ENCODE measurements at regions of chr17 and their contacts with region 1.

Region 1: GRCh38 chr17:81238817-81239600 is at the starts of genes NDUFAF8 and TEPSIN:
- DNase-seq: peak; percentile 89 to 99 (median 93)
- ATAC-seq: peak; percentile 95
- H3K4me3 ChIP-seq: peak within 1 kb of the TSS; percentile 90
- H3K4me3 Mint-ChIP-seq: peak within 1 kb of the TSS; percentile 98
- H3K27ac ChIP-seq: peak within 1 kb of the TSS in 1 of 2 donors; percentile 47
- H3K27ac Mint-ChIP-seq: peak within 1 kb of the TSS; percentile 92
- H3K4me1 ChIP-seq: peaks cover 58% of the 10 kb centered on the region
- H3K4me1 Mint-ChIP-seq: peaks cover 43% of the 10 kb centered on the region
- H3K27me3 ChIP-seq: no peaks in the 10 kb centered on the region
- H3K27me3 Mint-ChIP-seq: no peaks in the 10 kb centered on the region
- CTCF ChIP-seq: no peak
- total RNA-seq, gene NDUFAF8: 34.6 to 38.6 TPM
- total RNA-seq, gene TEPSIN: 68.2 to 74.4 TPM

Region 2: DNA sequence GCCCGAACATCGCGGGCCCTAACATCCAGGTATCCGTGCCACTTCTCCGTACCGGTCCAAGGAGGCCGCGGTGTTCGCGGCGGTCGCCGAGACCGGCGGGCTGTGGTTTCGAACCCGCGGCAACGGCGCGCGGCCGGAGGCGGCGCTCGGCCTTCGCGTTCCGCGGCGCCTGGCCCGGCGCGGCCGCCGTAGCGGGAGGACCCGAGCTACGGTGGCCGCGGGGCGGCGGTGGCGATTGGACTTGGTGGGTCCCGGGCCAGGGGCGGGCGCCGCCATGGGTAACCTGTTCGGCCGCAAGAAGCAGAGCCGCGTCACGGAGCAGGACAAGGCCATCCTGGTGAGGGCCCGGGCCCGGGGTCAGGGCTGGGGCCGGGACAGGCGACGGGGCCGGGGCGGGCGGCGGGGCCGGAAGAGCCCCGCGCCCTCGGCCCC is 247.3 kb before region 1 on chr17 and contains the start of gene CHMP6:
- CTCF ChIA-PET with region 1: no interaction called
- POLR2A ChIA-PET with region 1: interaction called, 3 read pairs
- intact Hi-C with region 1: loop called in 1 of 2 experiments (anchors 5 kb)
- DNase-seq: peak; percentile 45 to 87 (median 66)
- ATAC-seq: peak; percentile 70
- H3K4me3 ChIP-seq: peak within 1 kb of the TSS; percentile 77
- H3K4me3 Mint-ChIP-seq: peak within 1 kb of the TSS; percentile 87
- H3K27ac ChIP-seq: peak within 1 kb of the TSS in 1 of 2 donors; percentile 41
- H3K27ac Mint-ChIP-seq: peak within 1 kb of the TSS; percentile 84
- H3K4me1 ChIP-seq: peaks cover 43% of the 10 kb centered on the region
- H3K4me1 Mint-ChIP-seq: peaks cover 21% of the 10 kb centered on the region
- H3K27me3 ChIP-seq: no peaks in the 10 kb centered on the region
- H3K27me3 Mint-ChIP-seq: peaks cover 4% of the 10 kb centered on the region
- CTCF ChIP-seq: no peak
- total RNA-seq, gene CHMP6: 11.5 to 13.3 TPM

Region 3: DNA sequence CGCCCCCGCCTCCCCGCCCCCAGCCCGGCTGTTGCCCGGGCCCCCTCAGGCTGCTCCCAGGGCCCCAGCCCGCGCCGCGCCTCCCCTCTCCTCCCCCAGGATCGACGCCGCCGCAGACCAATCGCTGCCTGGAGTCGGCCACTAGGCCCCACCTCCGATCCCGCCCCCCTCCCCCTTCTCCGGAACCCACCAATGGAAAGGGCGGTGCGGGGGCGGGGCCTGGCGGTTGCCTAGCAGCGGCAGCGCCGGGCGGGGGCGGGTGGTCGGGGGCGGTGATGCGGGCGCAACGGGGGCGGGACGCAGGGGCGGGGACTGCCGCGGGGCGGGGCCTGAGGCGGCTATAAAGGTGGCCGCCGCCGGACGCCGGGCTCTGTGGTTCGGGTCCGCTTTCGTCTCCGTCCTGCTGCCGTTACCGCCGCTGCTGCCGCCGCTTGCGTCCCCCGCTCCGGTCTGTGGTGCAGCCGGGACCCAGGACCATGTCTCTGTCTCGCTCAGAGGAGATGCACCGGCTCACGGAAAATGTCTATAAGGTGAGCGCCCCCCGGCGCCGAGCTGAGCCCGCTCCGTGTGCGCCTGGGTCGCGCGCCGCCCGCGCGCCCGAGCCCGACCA is 204.1 kb before region 1 on chr17 and contains the start of gene BAIAP2:
- CTCF ChIA-PET with region 1: no interaction called
- POLR2A ChIA-PET with region 1: interaction called, 4 read pairs
- intact Hi-C with region 1: loop called in 1 of 2 experiments (anchors 5 kb)
- DNase-seq: peak; percentile 96 to 100 (median 98)
- ATAC-seq: peak; percentile 86
- H3K4me3 ChIP-seq: peak within 1 kb of the TSS; percentile 60
- H3K4me3 Mint-ChIP-seq: peak within 1 kb of the TSS; percentile 98
- H3K27ac ChIP-seq: no peak within 1 kb of the TSS
- H3K27ac Mint-ChIP-seq: peak within 1 kb of the TSS; percentile 82
- H3K4me1 ChIP-seq: peaks cover 25% of the 10 kb centered on the region
- H3K4me1 Mint-ChIP-seq: peaks cover 28% of the 10 kb centered on the region
- H3K27me3 ChIP-seq: peaks cover 0 to 2% of the 10 kb centered on the region in 2 experiments
- H3K27me3 Mint-ChIP-seq: peaks cover 1% of the 10 kb centered on the region
- CTCF ChIP-seq: no peak
- total RNA-seq, gene BAIAP2: 4.2 to 4.9 TPM

Region 4: GRCh38 chr17:81109957-81110356 is 129.1 kb before region 1 on chr17:
- CTCF ChIA-PET with region 1: no interaction called
- POLR2A ChIA-PET with region 1: no interaction called
- intact Hi-C with region 1: no loop called
- DNase-seq: no peak
- ATAC-seq: no peak
- H3K4me3 ChIP-seq: no peak overlapping the region
- H3K4me3 Mint-ChIP-seq: no peak overlapping the region
- H3K27ac ChIP-seq: no peak overlapping the region
- H3K27ac Mint-ChIP-seq: no peak overlapping the region
- H3K4me1 ChIP-seq: no peaks in the 10 kb centered on the region
- H3K4me1 Mint-ChIP-seq: no peaks in the 10 kb centered on the region
- H3K27me3 ChIP-seq: no peaks in the 10 kb centered on the region
- H3K27me3 Mint-ChIP-seq: no peaks in the 10 kb centered on the region
- CTCF ChIP-seq: no peak

Region 5: DNA sequence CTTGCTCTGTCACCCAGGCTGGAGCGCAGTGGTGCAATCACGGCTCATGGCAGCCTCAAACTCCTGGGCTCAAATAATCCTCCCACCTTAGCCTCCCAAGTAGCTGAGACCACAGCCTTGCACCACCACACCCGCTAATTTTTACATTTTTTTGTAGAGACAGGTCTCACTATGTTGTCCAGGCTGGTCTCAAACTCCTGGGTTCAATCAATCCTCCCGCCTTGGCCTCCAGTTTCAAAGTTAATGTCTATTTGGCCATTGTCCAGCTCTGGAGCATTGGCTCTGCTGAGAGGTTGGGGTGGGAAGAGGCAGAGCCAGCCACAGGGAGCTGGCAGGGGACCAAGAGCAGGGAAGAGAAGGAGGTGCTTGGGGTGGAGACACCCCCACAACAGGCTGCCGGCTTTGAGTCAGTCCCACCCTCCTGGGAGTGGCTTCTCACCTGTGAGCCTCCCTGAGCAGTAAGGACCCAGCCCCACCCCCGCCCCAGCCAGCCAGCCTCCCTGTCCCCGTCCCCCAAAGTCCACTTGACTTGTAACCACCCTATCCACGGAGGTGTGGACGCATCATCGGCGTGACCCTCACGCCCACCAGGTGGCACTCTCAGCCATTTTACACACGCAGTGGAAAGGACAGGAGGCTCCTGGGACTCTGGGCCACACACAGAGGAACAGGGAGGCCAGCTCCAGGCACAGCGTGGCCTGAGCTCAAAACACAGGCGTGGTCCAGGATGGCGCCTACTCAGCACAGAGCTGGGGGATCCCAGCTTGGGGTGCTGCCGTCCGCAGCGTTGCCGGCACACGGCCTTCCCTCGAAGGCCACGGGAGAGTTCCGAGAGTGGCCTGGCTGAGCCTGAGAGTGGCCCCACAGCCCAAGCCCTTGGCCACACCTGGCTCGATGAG is 96.5 kb before region 1 on chr17:
- CTCF ChIA-PET with region 1: no interaction called
- POLR2A ChIA-PET with region 1: no interaction called
- intact Hi-C with region 1: loop called (anchors 1 to 5 kb)
- DNase-seq: peak; percentile 35 to 78 (median 56)
- ATAC-seq: peak; percentile 73
- H3K4me3 ChIP-seq: no peak overlapping the region
- H3K4me3 Mint-ChIP-seq: no peak overlapping the region
- H3K27ac ChIP-seq: no peak overlapping the region
- H3K27ac Mint-ChIP-seq: no peak overlapping the region
- H3K4me1 ChIP-seq: no peaks in the 10 kb centered on the region
- H3K4me1 Mint-ChIP-seq: no peaks in the 10 kb centered on the region
- H3K27me3 ChIP-seq: peaks cover 0 to 3% of the 10 kb centered on the region in 2 experiments
- H3K27me3 Mint-ChIP-seq: no peaks in the 10 kb centered on the region
- CTCF ChIP-seq: peak; percentile 53

Region 6: GRCh38 chr17:81153340-81153803 is 85.6 kb before region 1 on chr17:
- CTCF ChIA-PET with region 1: no interaction called
- POLR2A ChIA-PET with region 1: no interaction called
- intact Hi-C with region 1: no loop called
- DNase-seq: peak in 4 of 14 experiments; percentile 8 to 76 (median 52)
- ATAC-seq: peak; percentile 17
- H3K4me3 ChIP-seq: no peak overlapping the region
- H3K4me3 Mint-ChIP-seq: no peak overlapping the region
- H3K27ac ChIP-seq: no peak overlapping the region
- H3K27ac Mint-ChIP-seq: peak overlapping the region; percentile 33
- H3K4me1 ChIP-seq: peaks cover 7% of the 10 kb centered on the region
- H3K4me1 Mint-ChIP-seq: no peaks in the 10 kb centered on the region
- H3K27me3 ChIP-seq: no peaks in the 10 kb centered on the region
- H3K27me3 Mint-ChIP-seq: peaks cover 6% of the 10 kb centered on the region
- CTCF ChIP-seq: no peak

Region 7: GRCh38 chr17:81222906-81223761 is 15.9 kb before region 1 on chr17 and contains the start of gene CEP131:
- CTCF ChIA-PET with region 1: no interaction called
- POLR2A ChIA-PET with region 1: interaction called, 42 read pairs
- intact Hi-C with region 1: loop called (anchors 1 kb)
- DNase-seq: peak; percentile 97 to 100 (median 100)
- ATAC-seq: peak; percentile 95
- H3K4me3 ChIP-seq: peak within 1 kb of the TSS; percentile 65
- H3K4me3 Mint-ChIP-seq: peak within 1 kb of the TSS; percentile 87
- H3K27ac ChIP-seq: no peak within 1 kb of the TSS
- H3K27ac Mint-ChIP-seq: no peak within 1 kb of the TSS
- H3K4me1 ChIP-seq: peaks cover 25% of the 10 kb centered on the region
- H3K4me1 Mint-ChIP-seq: peaks cover 23% of the 10 kb centered on the region
- H3K27me3 ChIP-seq: no peaks in the 10 kb centered on the region
- H3K27me3 Mint-ChIP-seq: no peaks in the 10 kb centered on the region
- CTCF ChIP-seq: no peak
- total RNA-seq, gene CEP131: 11.2 to 12.3 TPM

Region 8: DNA sequence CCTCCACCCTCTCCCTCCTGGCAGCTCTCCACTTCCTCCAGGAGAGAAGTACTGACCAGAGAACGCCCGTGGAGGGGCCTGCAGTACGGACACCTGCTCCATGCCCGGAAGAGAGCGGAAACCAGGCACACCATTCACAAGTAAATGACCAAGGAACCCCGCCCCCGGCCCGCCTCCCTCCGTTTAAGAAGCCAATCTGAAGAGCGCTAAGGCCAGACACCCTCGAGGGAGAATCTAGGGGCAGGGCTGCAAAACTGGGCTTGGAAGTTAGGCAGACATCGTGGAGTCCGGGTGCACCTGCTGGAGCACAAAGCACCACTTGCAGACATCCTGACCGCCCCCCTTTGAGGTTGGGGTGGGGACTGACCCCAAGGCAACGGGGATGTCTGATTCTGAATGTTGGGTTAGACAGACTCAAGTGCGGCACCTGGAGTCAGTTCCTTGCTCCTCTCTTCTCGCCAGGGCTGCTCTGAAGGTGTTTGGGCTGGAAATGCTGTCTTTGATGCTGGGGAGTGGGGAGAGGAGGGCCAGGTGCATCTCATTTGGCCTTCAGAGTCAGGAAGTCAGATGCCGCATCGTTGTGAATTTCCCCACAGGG is 314.1 kb after region 1 on chr17:
- CTCF ChIA-PET with region 1: no interaction called
- POLR2A ChIA-PET with region 1: interaction called, 5 read pairs
- intact Hi-C with region 1: loop called in 1 of 2 experiments (anchors 5 kb)
- DNase-seq: peak; percentile 48 to 92 (median 72)
- ATAC-seq: peak; percentile 74
- H3K4me3 ChIP-seq: peak overlapping the region; percentile 94
- H3K4me3 Mint-ChIP-seq: peak overlapping the region; percentile 94
- H3K27ac ChIP-seq: peak overlapping the region; percentile 79 to 83
- H3K27ac Mint-ChIP-seq: peak overlapping the region; percentile 93
- H3K4me1 ChIP-seq: peaks cover 41% of the 10 kb centered on the region
- H3K4me1 Mint-ChIP-seq: peaks cover 30% of the 10 kb centered on the region
- H3K27me3 ChIP-seq: no peaks in the 10 kb centered on the region
- H3K27me3 Mint-ChIP-seq: no peaks in the 10 kb centered on the region
- CTCF ChIP-seq: peak; percentile 0